ENCODE measurements at regions of chr12 and their contacts with region 1.

Region 1: DNA sequence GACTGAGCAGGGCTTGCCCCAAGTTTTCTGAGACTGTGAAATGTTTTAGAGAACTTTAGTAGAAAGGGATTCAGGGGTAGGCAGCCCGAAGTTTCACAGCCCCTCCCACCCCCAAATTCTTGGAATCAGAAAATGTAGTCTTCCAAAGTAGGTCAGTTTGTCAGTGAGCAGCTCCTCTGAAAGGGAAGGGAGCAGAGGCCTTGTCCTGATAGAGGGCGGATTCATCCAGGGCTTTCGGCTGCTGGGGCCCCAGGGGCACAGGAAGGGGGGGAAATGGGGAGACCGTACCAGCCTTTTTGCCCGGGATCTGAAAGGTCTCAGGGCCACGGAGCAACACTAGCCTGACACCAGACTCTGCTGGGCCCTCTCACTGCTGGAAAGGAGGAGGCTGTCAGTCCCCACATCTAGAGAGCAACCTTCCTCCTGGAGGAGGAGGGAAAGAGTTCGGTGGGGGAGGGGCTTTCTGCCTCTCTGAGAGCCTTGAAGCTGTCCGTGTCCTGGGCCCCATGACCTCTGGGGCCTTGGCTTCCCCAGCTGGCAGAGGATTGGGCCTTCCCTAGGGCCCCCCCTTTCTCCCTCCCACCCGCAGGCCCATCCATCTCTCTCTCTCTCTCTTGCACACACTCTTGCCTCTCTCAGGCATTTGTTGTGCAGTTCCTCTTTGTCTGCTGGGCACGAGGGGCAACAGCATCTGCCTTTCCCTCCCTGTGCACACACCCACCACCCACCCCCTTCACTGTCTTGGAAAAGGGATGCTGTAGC is at the start of gene IKZF4:
- DNase-seq: peak; percentile 25
- H3K4me3 Mint-ChIP-seq: peak within 1 kb of the TSS; percentile 89
- H3K27ac Mint-ChIP-seq: peak within 1 kb of the TSS; percentile 95
- H3K4me1 Mint-ChIP-seq: peaks cover 57% of the 10 kb centered on the region
- H3K27me3 Mint-ChIP-seq: no peaks in the 10 kb centered on the region
- total RNA-seq, gene IKZF4: 15.7 to 17.4 TPM

Region 2: DNA sequence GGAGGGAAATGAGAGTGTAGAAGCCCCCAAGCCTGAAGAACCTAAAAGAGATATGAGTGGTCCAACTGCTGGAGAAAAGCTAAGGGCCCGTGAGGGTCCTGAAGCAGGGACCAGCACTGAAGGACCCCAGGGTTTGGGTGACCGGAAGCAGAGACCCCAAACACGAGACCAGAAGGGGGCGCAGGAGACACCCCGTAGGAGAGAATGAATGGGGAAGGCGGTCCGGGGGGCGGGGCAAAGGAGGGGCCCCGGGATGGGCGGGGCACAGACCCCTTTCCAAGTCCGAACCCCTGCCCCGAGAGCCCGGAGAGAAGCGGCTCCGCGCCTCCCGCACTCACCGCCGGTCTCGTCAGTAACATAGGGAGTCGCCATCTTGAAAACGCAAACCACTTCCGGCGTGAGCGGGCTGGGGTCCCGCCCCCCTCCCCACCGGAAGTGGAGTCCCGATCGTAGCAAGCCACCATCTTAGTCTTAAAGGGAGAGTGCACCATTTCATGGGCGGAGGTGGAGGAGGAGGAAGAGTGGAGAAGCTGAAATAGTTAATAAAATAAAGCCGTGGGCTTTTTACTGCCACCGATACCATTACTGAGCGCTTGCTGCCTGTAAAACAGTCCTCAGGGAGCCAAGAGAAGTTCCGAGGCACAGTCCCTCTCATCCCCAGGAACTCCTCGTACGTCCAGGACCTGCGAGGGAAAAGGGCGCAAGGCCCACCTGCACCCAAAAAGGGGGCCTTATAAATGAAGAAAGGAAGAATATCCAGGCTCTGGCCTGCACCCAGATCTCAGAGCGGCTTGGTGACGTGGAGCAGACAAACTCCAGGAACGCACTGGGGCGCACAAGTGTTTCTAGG is 93.6 kb before region 1 on chr12:
- CTCF ChIA-PET with region 1: no interaction called
- POLR2A ChIA-PET with region 1: no interaction called
- DNase-seq: peak; percentile 96
- H3K4me3 Mint-ChIP-seq: peak overlapping the region; percentile 89
- H3K27ac Mint-ChIP-seq: peak overlapping the region; percentile 99
- H3K4me1 Mint-ChIP-seq: peaks cover 39% of the 10 kb centered on the region
- H3K27me3 Mint-ChIP-seq: no peaks in the 10 kb centered on the region

Region 3: DNA sequence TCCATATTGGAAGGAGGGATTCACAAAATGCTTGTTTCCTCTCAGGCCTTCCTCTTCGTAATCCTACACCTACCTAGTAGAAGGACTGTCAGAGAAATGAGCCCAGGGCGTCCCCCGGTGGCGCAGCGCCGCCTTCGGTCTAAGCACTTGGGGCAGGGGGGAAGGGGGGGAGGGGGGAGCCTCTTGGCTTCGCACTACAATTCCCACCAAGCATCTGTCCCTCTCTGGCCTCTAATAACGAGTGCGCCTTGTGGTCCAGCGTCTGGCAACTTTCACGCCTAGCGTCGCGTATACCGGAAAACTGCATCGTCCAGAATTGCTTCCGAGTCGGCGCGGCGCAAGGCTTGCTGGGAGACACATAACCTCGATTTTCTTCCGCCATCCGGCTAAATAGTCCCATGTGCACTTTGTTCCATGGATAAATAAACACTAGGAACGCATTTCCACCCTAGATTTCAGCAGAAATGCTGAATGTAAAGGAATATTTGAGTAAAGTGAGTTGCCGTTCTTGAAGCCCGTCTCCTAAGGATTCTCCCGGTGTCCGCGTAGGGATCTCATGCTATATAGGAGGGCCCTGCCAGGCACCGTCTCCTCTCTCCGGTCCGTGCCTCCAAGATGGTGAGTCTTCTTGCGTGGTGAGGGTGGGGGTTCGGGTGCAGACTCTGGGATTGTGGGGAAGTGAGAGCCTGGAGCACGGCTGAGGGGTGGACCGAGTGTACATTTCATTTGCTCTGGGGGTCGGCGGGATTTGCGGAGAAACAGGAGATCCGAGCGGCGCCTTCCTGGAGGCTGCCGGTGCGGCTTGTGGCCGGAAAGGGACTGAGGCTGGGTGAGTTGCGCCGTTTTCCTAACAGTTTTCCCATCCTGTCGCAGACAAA is 21.2 kb after region 1 on chr12 and contains the start of gene RPS26:
- CTCF ChIA-PET with region 1: interaction called, 10 read pairs
- POLR2A ChIA-PET with region 1: no interaction called
- DNase-seq: peak; percentile 97
- H3K4me3 Mint-ChIP-seq: peak within 1 kb of the TSS; percentile 100
- H3K27ac Mint-ChIP-seq: peak within 1 kb of the TSS; percentile 99
- H3K4me1 Mint-ChIP-seq: peaks cover 57% of the 10 kb centered on the region
- H3K27me3 Mint-ChIP-seq: no peaks in the 10 kb centered on the region
- total RNA-seq, gene RPS26: 47.2 to 48.3 TPM